Mucosa of descending colon (tissue), 3 donors: ENCODE measurements at regions of chr1 and their contacts with region 1.

Region 1: DNA sequence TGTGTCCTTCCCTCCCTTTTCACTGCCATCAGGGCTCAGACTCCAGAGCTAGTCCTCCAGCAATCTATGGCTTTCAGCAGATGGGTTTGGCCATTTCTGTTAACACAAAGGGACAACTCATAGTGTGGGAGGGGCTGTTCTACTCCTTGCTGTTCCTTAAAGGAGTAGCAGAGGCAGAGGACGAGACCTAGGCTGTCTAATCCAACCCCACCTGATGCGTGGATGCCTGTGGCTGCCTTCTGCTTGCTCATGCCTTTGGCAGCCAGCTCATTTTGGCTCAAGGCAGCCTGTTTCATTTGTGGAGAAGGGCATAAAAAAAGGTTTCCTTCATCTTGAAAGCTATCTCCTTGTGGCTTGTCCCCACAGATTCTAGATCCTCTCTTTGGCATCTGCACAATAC is 27.0 kb downstream of the MFSD2A start:
- DNase-seq: peak in 1 of 3 donors; percentile 34
- ATAC-seq: peak; percentile 54
- H3K4me3 ChIP-seq: no peak overlapping the region
- H3K4me1 ChIP-seq: peaks cover 19% of the 10 kb centered on the region
- CTCF ChIP-seq: no peak

Region 2: DNA sequence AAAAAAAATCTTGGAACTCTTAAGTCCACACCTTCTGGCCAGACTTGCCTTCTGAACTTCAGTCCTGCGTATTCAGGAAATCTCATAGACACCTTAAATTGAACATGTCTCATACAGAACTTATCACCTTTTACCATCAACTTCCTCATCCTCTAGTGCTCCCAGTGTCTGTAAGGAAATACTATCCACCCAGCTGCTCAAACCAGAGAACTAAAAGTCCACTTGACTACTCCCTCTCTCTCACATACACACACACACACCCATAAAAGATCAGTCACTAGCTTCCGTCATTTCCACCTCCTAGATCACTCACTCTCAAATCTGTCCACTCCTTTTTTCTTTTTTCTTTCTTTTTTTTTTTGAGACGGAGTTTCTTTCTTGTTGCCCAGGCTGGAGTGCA is 47.7 kb after region 1 on chr1:
- intact Hi-C with region 1: loop called in 1 of 2 experiments (anchors 2 kb)
- DNase-seq: peak in 1 of 3 donors; percentile 60
- ATAC-seq: peak; percentile 95
- H3K4me3 ChIP-seq: no peak overlapping the region
- H3K4me1 ChIP-seq: peaks cover 34% of the 10 kb centered on the region
- CTCF ChIP-seq: no peak

Region 3: GRCh38 chr1:40167317-40167716 is 185.4 kb after region 1 on chr1:
- intact Hi-C with region 1: no loop called
- DNase-seq: no peak
- ATAC-seq: no peak
- H3K4me3 ChIP-seq: no peak overlapping the region
- H3K4me1 ChIP-seq: peaks cover 20% of the 10 kb centered on the region
- CTCF ChIP-seq: no peak